Left ventricle myocardium inferior (tissue), 1 donor: ENCODE measurements at regions of chr1 and their contacts with region 1.

Region 1: GRCh38 chr1:81414488-81415015 is 386.2 kb upstream of the ADGRL2 start:
- DNase-seq: peak; percentile 77
- H3K4me3 ChIP-seq: no peak overlapping the region
- H3K27ac ChIP-seq: peak overlapping the region; percentile 74
- H3K4me1 ChIP-seq: peaks cover 41% of the 10 kb centered on the region
- H3K27me3 ChIP-seq: no peaks in the 10 kb centered on the region
- CTCF ChIP-seq: peak; percentile 90

Region 2: DNA sequence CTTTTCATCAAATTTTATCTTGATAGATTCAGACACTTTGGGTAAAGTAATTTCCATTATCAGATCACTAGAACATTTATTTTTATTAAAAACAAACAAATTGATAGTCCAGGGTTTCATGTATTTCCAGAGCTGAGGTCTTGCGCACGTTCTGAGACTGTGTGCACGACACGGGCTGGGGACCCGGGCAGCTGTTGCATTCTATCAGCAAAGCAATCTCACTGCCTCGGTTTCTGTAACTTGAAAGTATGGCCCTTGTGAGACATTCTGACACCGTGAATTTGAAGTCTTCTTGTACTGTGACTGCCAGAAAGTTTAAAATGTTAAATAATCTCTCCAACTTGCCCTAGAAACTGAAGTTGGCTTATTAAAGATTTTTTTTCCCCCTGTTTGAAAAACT is 360.7 kb before region 1 on chr1:
- intact Hi-C with region 1: no loop called
- DNase-seq: no peak
- H3K4me3 ChIP-seq: no peak overlapping the region
- H3K27ac ChIP-seq: no peak overlapping the region
- H3K4me1 ChIP-seq: no peaks in the 10 kb centered on the region
- H3K27me3 ChIP-seq: no peaks in the 10 kb centered on the region
- CTCF ChIP-seq: no peak

Region 3: GRCh38 chr1:81097866-81098265 is 316.7 kb before region 1 on chr1:
- intact Hi-C with region 1: no loop called
- DNase-seq: no peak
- H3K4me3 ChIP-seq: no peak overlapping the region
- H3K27ac ChIP-seq: no peak overlapping the region
- H3K4me1 ChIP-seq: no peaks in the 10 kb centered on the region
- H3K27me3 ChIP-seq: no peaks in the 10 kb centered on the region
- CTCF ChIP-seq: no peak

Region 4: GRCh38 chr1:81549604-81550127 is 135.1 kb after region 1 on chr1:
- intact Hi-C with region 1: loop called (anchors 10 kb)
- DNase-seq: no peak
- H3K4me3 ChIP-seq: no peak overlapping the region
- H3K27ac ChIP-seq: no peak overlapping the region
- H3K4me1 ChIP-seq: peaks cover 15% of the 10 kb centered on the region
- H3K27me3 ChIP-seq: no peaks in the 10 kb centered on the region
- CTCF ChIP-seq: peak; percentile 65